ENCODE measurements at regions of chr19 and their contacts with region 1.

Region 1: GRCh38 chr19:50383852-50384684 is at the start of gene POLD1:
- DNase-seq: peak; percentile 98 to 99
- H3K4me3 ChIP-seq: peak within 1 kb of the TSS; percentile 63 to 91 (median 89)
- H3K27ac ChIP-seq: peak within 1 kb of the TSS; percentile 75
- H3K4me1 ChIP-seq: peaks cover 0 to 3% (median under 1%) of the 10 kb centered on the region in 4 experiments; a peak in 4 of 7 replicates
- H3K27me3 ChIP-seq: no peaks in the 10 kb centered on the region
- CTCF ChIP-seq: no peak
- EP300 ChIP-seq: no peak
- POLR2A ChIP-seq: peak; percentile 60 to 80; a peak in 2 of 3 replicates
- RAD21 ChIP-seq: no peak
- total RNA-seq, gene POLD1: 141 and 149 TPM in 2 replicates

Region 2: GRCh38 chr19:50329146-50329925 is 54.7 kb before region 1 on chr19 and contains the start of gene KCNC3:
- CTCF ChIA-PET with region 1: no interaction called
- POLR2A ChIA-PET with region 1: interaction called, 15 read pairs
- DNase-seq: peak; percentile 98 to 99
- H3K4me3 ChIP-seq: peak within 1 kb of the TSS; percentile 74 to 96 (median 84)
- H3K27ac ChIP-seq: 0 out of 2 replicates have a peak within 1 kb of the TSS, but pooled peaks have one; percentile 12
- H3K4me1 ChIP-seq: peaks cover 2 to 33% (median 15%) of the 10 kb centered on the region in 4 experiments
- H3K27me3 ChIP-seq: peaks cover 5 to 15% (median 12%) of the 10 kb centered on the region in 4 experiments; a peak in 6 of 7 replicates
- CTCF ChIP-seq: no peak
- EP300 ChIP-seq: no peak
- POLR2A ChIP-seq: peak; percentile 56 to 74; a peak in 2 of 3 replicates
- RAD21 ChIP-seq: no peak
- total RNA-seq, gene KCNC3: 7.2 and 8.5 TPM in 2 replicates

Region 3: GRCh38 chr19:50368649-50369570 is 15.2 kb before region 1 on chr19:
- CTCF ChIA-PET with region 1: interaction called, 11 read pairs
- POLR2A ChIA-PET with region 1: interaction called, 28 read pairs
- DNase-seq: peak in 1 of 2 experiments; percentile 95
- H3K4me3 ChIP-seq: peak overlapping the region; percentile 54 to 72 (median 68)
- H3K27ac ChIP-seq: no peak overlapping the region
- H3K4me1 ChIP-seq: no peaks in the 10 kb centered on the region; a peak in 2 of 7 replicates
- H3K27me3 ChIP-seq: no peaks in the 10 kb centered on the region; a peak in 1 of 7 replicates
- CTCF ChIP-seq: peak; percentile 70 to 92 (median 85)
- EP300 ChIP-seq: no peak; a peak in 1 of 3 replicates
- POLR2A ChIP-seq: 0 out of 3 replicates have a peak, but pooled peaks of 1 of the 2 experiments have one; percentile 23
- RAD21 ChIP-seq: peak; percentile 86 to 88

Region 4: DNA sequence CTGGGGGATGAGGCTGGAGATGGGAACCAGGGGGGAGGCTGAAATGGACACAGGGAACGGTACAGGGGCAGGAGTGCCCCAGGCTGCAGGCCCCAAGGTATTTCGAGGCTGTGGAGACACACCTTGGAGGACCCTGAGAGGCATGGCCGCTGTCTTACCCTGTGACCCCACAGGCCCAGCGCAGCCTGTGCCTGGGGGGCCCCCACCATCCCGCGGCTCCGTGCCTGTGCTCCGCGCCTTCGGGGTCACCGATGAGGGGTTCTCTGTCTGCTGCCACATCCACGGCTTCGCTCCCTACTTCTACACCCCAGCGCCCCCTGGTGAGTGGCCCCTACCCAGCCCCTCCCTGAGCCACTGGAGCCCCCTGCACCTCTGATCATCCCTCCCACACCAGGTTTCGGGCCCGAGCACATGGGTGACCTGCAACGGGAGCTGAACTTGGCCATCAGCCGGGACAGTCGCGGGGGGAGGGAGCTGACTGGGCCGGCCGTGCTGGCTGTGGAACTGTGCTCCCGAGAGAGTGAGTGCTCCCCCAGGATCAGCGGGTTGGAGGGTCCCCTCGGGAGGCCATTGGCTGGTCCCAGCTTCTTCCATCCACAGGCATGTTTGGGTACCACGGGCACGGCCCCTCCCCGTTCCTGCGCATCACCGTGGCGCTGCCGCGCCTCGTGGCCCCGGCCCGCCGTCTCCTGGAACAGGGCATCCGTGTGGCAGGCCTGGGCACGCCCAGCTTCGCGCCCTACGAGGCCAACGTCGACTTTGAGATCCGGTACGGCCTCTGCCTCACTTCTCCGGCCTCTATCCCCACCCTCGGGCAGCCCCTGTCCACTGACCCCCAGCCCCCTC is 17.8 kb after region 1 on chr19:
- CTCF ChIA-PET with region 1: interaction called, 6 read pairs
- POLR2A ChIA-PET with region 1: interaction called, 15 read pairs
- DNase-seq: no peak
- H3K4me3 ChIP-seq: no peak overlapping the region
- H3K27ac ChIP-seq: no peak overlapping the region
- H3K4me1 ChIP-seq: no peaks in the 10 kb centered on the region
- H3K27me3 ChIP-seq: no peaks in the 10 kb centered on the region
- CTCF ChIP-seq: peak in 2 of 3 experiments; percentile 6; a peak in 2 of 4 replicates
- EP300 ChIP-seq: no peak
- POLR2A ChIP-seq: no peak
- RAD21 ChIP-seq: no peak; a peak in 1 of 4 replicates

Region 5: DNA sequence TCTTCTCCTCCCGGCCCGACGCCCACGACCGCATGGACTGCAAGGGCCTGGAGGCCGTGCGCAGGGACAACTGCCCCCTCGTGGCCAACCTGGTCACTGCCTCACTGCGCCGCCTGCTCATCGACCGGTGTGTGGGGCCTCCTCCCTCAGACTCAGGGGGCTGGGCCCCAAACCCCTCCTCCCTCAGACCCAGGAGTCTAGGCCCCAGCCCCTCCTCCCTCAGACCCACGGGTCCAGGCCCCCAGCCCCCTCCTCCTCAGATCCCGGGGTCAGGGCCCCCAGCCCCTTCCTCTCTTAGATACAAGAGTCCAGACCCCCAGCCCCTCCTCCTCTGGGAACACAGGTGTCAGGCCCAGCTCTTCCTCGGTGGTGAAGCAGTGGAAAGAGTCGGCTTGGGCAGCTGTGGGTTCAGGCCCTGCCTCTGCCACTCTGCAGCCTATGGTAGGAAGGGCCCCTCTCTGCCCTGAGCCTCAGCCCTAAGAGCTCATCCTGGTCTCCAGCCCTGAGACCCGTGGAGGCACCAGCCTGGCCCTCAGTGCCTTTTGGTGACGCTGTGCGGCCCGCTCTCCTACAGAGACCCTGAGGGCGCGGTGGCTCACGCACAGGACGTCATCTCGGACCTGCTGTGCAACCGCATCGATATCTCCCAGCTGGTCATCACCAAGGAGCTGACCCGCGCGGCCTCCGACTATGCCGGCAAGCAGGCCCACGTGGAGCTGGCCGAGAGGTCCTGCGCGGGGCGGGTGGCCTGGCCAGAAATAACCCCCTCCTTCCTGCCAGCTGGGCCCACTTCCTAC is 31.0 kb after region 1 on chr19:
- CTCF ChIA-PET with region 1: interaction called, 4 read pairs
- POLR2A ChIA-PET with region 1: interaction called, 15 read pairs
- DNase-seq: peak; percentile 79 to 98
- H3K4me3 ChIP-seq: no peak overlapping the region
- H3K27ac ChIP-seq: no peak overlapping the region; the same call in 1 of the 2 replicates
- H3K4me1 ChIP-seq: peaks cover 0 to 20% (median 12%) of the 10 kb centered on the region in 4 experiments; a peak in 6 of 7 replicates
- H3K27me3 ChIP-seq: peaks cover 0 to 2% (median 0%) of the 10 kb centered on the region in 4 experiments; a peak in 1 of 7 replicates
- CTCF ChIP-seq: peak; percentile 94 to 99 (median 95)
- EP300 ChIP-seq: no peak
- POLR2A ChIP-seq: no peak
- RAD21 ChIP-seq: peak; percentile 65 to 76

Region 6: GRCh38 chr19:50423295-50424113 is 39.4 kb after region 1 on chr19:
- CTCF ChIA-PET with region 1: interaction called, 5 read pairs
- POLR2A ChIA-PET with region 1: interaction called, 15 read pairs
- DNase-seq: no peak
- H3K4me3 ChIP-seq: no peak overlapping the region
- H3K27ac ChIP-seq: no peak overlapping the region
- H3K4me1 ChIP-seq: peaks cover 0 to 15% (median 11%) of the 10 kb centered on the region in 4 experiments; a peak in 6 of 7 replicates
- H3K27me3 ChIP-seq: peaks cover 0 to 6% (median 2%) of the 10 kb centered on the region in 4 experiments; a peak in 1 of 7 replicates
- CTCF ChIP-seq: no peak
- EP300 ChIP-seq: no peak
- POLR2A ChIP-seq: no peak
- RAD21 ChIP-seq: no peak

Region 7: DNA sequence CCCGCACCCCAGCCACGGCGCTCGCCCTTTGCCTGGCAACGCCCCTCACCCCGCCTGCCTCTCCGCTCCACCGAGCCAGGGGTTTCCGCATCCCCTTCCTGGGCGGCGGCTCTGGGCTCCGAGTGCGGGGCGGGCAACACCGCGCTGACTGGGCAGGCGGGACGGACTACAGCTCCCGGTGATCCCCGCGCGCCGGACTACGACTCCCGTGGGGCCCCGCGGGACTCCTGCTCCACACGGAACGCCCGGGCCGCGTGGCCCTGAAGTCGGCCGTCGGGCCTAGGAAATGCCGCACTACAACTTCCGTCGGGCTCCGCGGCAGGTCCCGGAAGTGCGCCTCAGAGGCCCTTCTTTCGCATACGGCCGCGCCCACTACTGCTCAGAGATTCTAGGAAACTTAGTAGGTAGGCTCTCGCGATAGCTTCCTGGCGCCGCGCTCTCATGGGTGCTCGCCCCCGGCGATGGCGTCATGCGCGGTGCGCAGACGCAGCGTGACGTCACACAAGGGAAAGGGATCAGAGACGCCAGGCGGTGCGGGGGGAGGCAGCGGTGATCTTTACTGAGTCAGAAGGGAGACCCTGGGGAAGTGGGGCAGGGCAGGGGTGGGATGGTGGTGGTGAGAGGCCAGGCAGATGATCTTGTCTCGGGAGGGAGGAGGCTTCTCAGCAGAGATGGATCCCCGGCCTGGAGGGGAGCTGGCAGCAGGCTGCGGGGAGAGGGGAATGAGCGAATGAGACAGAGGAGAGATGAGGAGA is 127.2 kb after region 1 on chr19 and contains the start of gene JOSD2:
- CTCF ChIA-PET with region 1: no interaction called
- POLR2A ChIA-PET with region 1: no interaction called
- DNase-seq: peak; percentile 91 to 94
- H3K4me3 ChIP-seq: peak within 1 kb of the TSS; percentile 42 to 62 (median 56)
- H3K27ac ChIP-seq: peak within 1 kb of the TSS; percentile 32; the same call in 1 of the 2 replicates
- H3K4me1 ChIP-seq: peaks cover 0 to 6% (median 4%) of the 10 kb centered on the region in 4 experiments; a peak in 4 of 7 replicates
- H3K27me3 ChIP-seq: peaks cover 0 to 26% (median 15%) of the 10 kb centered on the region in 4 experiments; a peak in 6 of 7 replicates
- CTCF ChIP-seq: no peak; a peak in 1 of 4 replicates
- EP300 ChIP-seq: no peak
- POLR2A ChIP-seq: no peak
- RAD21 ChIP-seq: no peak
- total RNA-seq, gene JOSD2: 1.9 and 3.6 TPM in 2 replicates

Measured in H1 (cell line).